Lower leg skin (tissue), 4 donors: ENCODE measurements at regions of chr19 and their contacts with region 1.

Region 1: GRCh38 chr19:47243776-47244547 is 12.4 kb upstream of the CCDC9 start:
- DNase-seq: peak; percentile 88 to 98
- H3K4me3 ChIP-seq: no peak overlapping the region
- CTCF ChIP-seq: peak in 1 of 3 donors; percentile 95
- POLR2A ChIP-seq: no peak

Region 2: DNA sequence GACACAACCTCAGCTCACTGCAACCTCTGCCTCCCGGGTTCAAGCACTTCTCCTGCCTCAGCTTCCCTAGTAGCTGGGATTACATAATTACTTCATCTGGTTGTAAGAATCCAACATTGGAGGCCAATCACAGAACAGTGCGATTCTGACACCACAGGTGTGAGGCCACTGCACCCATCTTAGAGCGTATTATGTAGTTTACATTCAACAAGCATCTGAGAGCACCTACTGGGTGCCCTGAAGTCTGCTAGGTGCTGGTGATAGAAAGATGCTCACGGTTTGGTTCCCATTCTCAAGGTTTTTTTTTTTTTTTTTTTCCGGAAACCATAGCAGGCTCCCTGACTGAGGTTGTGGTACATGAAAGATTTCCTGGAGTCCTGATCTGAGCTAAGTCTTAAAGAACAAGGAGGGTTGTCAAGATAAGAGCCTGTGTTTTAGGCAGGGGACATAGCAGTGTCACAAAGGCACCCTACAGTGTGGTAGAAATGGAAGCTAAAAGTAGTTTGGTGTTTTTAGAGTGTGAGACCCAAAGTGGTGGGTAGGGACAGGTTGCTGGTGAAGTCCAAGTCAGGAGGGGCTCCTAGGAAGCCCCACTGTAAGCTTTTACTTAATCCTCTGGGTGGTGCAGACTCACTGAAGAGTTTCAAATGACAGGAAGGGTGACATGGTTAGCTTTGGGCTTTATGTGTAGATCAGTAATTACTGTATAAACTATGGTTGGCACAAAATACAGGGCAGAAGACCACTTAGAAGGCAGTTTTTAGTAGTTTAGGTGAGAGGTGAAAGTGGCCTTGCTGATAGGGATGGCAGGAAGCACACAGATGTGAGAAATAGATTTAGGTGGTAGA is 98.1 kb before region 1 on chr19:
- intact Hi-C with region 1: loop called (anchors 5 kb)
- DNase-seq: no peak
- H3K4me3 ChIP-seq: no peak overlapping the region
- CTCF ChIP-seq: no peak
- POLR2A ChIP-seq: no peak

Region 3: GRCh38 chr19:47210689-47211316 is 33.2 kb before region 1 on chr19:
- intact Hi-C with region 1: loop called (anchors 2 kb)
- DNase-seq: peak; percentile 91 to 97
- H3K4me3 ChIP-seq: no peak overlapping the region
- CTCF ChIP-seq: peak in 2 of 3 donors; percentile 46 to 76
- POLR2A ChIP-seq: no peak